GM23248 (cell line): ENCODE measurements at regions of chr3 and their contacts with region 1.

Region 1: GRCh38 chr3:179100652-179101051 is 29.0 kb upstream of the ZMAT3 start:
- DNase-seq: peak; percentile 65
- H3K4me3 ChIP-seq: no peak overlapping the region
- H3K27ac ChIP-seq: no peak overlapping the region
- H3K4me1 ChIP-seq: peaks cover 20% of the 10 kb centered on the region
- H3K27me3 ChIP-seq: no peaks in the 10 kb centered on the region

Region 2: DNA sequence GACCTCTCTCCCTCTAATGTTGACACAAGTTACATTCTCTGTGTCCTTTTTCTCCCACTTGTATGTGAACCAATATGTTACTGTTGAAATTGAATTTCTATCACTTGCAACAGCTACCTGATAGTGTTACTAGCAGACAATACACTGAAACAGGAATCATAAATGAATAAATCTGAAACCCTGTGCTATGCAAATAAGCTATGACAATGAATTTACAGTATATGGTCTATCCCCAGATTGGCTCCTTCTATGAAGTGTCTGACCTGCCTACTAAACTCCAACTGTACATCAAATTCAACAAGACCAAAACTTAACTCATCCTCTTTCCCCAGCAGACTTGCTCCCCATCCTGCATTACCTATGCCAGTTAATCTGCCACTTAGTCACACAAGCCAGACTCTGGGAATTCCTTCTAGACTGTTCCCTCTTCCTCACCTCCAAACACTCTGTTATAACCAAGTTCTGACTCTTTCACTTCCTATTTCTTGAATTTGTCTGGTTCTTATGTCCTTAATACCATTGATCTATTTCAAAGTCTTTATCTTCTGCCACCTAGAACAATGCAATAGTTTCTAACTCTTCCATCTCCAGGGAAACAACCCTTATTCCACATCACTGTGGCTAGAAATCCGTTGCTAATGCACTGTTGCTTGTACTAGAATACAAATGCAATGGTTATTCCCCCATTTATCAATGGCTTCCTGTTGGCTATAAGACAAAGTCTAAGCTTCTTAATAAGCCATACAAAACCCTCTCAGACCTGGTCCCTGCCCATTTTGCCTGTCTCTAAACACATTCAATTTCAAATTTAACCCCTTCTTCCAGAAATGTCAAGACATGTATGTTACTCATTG is 208.8 kb after region 1 on chr3:
- in situ Hi-C with region 1: loop called (anchors 10 kb)
- DNase-seq: no peak
- H3K4me3 ChIP-seq: no peak overlapping the region
- H3K27ac ChIP-seq: no peak overlapping the region
- H3K4me1 ChIP-seq: no peaks in the 10 kb centered on the region
- H3K27me3 ChIP-seq: no peaks in the 10 kb centered on the region

Region 3: DNA sequence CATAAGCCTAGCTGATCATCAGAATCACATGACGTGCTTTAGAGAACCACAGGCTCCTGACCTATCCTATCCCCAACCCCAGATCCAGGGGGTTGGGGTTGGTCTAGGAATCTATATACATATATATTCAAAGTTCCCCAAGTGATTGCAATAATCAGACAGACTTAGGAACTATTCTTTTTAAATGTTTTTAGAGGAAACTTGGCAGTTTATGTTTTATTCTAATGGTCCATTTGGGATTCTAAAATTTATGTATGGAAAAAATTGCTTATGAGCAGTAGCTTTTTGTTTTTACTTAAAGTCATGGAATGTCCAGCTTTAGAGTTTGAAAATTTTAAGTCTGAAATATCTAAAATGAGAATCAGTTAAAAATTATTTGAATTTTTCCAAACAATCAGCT is 269.0 kb after region 1 on chr3:
- in situ Hi-C with region 1: no loop called
- DNase-seq: no peak
- H3K4me3 ChIP-seq: no peak overlapping the region
- H3K27ac ChIP-seq: no peak overlapping the region
- H3K4me1 ChIP-seq: no peaks in the 10 kb centered on the region
- H3K27me3 ChIP-seq: no peaks in the 10 kb centered on the region